Activated CD4-positive, alpha-beta T cell treated with anti-CD3 and anti-CD28 coated beads for 36 hours (primary cell): ENCODE measurements at regions of chrX and their contacts with region 1.

Region 1: GRCh38 chrX:147803948-147804347 is 107.8 kb upstream of the FMR1 start:
- DNase-seq: peak; percentile 6
- ATAC-seq: peak; percentile 61
- H3K4me3 Mint-ChIP-seq: no peak overlapping the region
- H3K27ac Mint-ChIP-seq: no peak overlapping the region
- H3K4me1 Mint-ChIP-seq: no peaks in the 10 kb centered on the region
- H3K27me3 Mint-ChIP-seq: no peaks in the 10 kb centered on the region

Region 2: DNA sequence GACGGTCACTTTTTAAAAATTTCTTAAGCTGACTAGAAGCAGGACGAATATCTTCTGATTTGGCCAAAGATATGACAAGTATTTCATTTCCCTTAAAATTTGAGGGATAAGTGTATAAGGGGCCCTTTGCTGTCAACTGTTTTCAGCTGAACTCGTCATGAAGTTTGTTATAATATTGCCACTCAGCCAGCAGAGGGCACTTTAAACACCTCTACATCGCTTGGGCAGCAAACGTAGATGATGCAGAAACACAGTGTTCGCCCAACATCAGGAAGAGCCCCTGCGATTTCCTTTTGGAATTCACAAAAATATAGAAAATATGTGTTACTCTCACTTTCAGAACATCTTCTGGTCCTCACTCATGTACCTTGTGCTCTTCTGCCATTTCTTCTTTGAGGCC is 327.9 kb before region 1 on chrX:
- CTCF ChIA-PET with region 1: no interaction called
- POLR2A ChIA-PET with region 1: no interaction called
- intact Hi-C with region 1: loop called (anchors 1 to 5 kb)
- DNase-seq: peak; percentile 8
- ATAC-seq: no peak
- H3K4me3 Mint-ChIP-seq: no peak overlapping the region
- H3K27ac Mint-ChIP-seq: no peak overlapping the region
- H3K4me1 Mint-ChIP-seq: no peaks in the 10 kb centered on the region
- H3K27me3 Mint-ChIP-seq: no peaks in the 10 kb centered on the region